T-cell (primary cell): ENCODE measurements at regions of chr7 and their contacts with region 1.

Region 1: DNA sequence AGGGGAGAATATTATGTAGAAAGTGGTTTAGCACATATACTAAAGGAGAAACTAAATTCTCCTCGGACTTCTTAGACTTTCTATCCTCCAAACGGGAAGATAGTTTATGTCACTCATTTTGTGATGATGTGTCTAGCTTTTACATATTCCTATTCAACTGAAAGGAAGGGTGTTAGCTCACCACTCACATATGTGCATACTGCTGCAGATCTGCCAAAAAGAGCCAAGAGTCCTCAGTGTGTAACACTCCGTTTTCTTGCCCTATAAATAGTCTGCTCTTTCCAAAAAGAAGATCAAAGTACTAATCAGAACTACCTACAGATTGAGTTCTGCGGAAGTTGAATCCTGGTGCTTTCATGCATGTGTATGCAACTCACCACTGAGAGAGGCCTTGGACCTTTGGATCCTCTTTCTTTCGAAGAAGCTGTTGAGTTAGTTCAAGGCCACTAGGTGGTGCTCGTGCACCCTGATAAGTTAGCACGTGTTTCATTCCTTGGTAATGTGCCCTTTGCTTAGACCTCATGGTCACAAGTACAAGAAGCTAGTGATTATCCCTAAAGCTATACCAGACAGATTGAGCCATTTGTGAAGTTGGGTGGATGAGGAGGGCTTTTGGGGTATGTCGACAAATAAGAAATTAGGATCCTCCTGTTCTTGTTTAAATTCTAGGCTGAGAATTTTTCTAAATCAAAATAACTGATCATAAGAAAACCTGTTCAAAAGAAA is 14.1 kb downstream of the YAE1 start:
- DNase-seq: peak; percentile 36 to 94 (median 69)
- ATAC-seq: peak; percentile 86 to 91 (median 90)
- H3K4me3 ChIP-seq: no peak overlapping the region
- H3K4me3 Mint-ChIP-seq: no peak overlapping the region
- H3K27ac ChIP-seq: no peak overlapping the region
- H3K27ac Mint-ChIP-seq: peak overlapping the region; percentile 9 to 13
- H3K4me1 ChIP-seq: no peaks in the 10 kb centered on the region
- H3K4me1 Mint-ChIP-seq: peaks cover 9 to 12% (median 10%) of the 10 kb centered on the region in 3 donors
- H3K27me3 ChIP-seq: no peaks in the 10 kb centered on the region
- H3K27me3 Mint-ChIP-seq: no peaks in the 10 kb centered on the region

Region 2: GRCh38 chr7:39566023-39566921 is 14.0 kb before region 1 on chr7 and contains the start of gene YAE1:
- CTCF ChIA-PET with region 1: interaction called, 6 to 14 read pairs
- POLR2A ChIA-PET with region 1: interaction called in 1 of 2 experiments, 4 read pairs
- DNase-seq: peak; percentile 60 to 85 (median 73)
- ATAC-seq: peak; percentile 91 to 96 (median 94)
- H3K4me3 ChIP-seq: peak within 1 kb of the TSS; percentile 82 to 98
- H3K4me3 Mint-ChIP-seq: peak within 1 kb of the TSS; percentile 98 to 99 (median 98)
- H3K27ac ChIP-seq: peak within 1 kb of the TSS; percentile 76
- H3K27ac Mint-ChIP-seq: peak within 1 kb of the TSS; percentile 95 to 99
- H3K4me1 ChIP-seq: peaks cover 5 to 12% of the 10 kb centered on the region in 2 experiments
- H3K4me1 Mint-ChIP-seq: peaks cover 28 to 38% (median 29%) of the 10 kb centered on the region in 3 donors
- H3K27me3 ChIP-seq: no peaks in the 10 kb centered on the region
- H3K27me3 Mint-ChIP-seq: no peaks in the 10 kb centered on the region
- total RNA-seq, gene YAE1: 7.5 to 21.9 (median 15.6) TPM

Region 3: GRCh38 chr7:39623018-39623731 is 42.9 kb after region 1 on chr7 and contains the start of gene RALA:
- CTCF ChIA-PET with region 1: interaction called, 8 to 31 read pairs
- POLR2A ChIA-PET with region 1: interaction called in 1 of 2 experiments, 3 read pairs
- DNase-seq: peak; percentile 77 to 93 (median 88)
- ATAC-seq: peak; percentile 94 to 96 (median 94)
- H3K4me3 ChIP-seq: peak within 1 kb of the TSS; percentile 85 to 92
- H3K4me3 Mint-ChIP-seq: peak within 1 kb of the TSS; percentile 94 to 99 (median 99)
- H3K27ac ChIP-seq: peak within 1 kb of the TSS; percentile 87
- H3K27ac Mint-ChIP-seq: peak within 1 kb of the TSS; percentile 95 to 96
- H3K4me1 ChIP-seq: peaks cover 18 to 33% of the 10 kb centered on the region in 2 experiments
- H3K4me1 Mint-ChIP-seq: peaks cover 52% of the 10 kb centered on the region in 3 donors
- H3K27me3 ChIP-seq: no peaks in the 10 kb centered on the region
- H3K27me3 Mint-ChIP-seq: no peaks in the 10 kb centered on the region
- total RNA-seq, gene RALA: 24.4 to 49.8 (median 36.7) TPM

Region 4: GRCh38 chr7:39732837-39733804 is 152.8 kb after region 1 on chr7:
- CTCF ChIA-PET with region 1: interaction called, 12 to 36 read pairs
- POLR2A ChIA-PET with region 1: interaction called in 1 of 2 experiments, 3 read pairs
- DNase-seq: peak; percentile 77 to 97 (median 93)
- ATAC-seq: peak; percentile 88 to 96 (median 94)
- H3K4me3 ChIP-seq: peak overlapping the region; percentile 71 to 76
- H3K4me3 Mint-ChIP-seq: peak overlapping the region; percentile 91 to 95 (median 93)
- H3K27ac ChIP-seq: peak overlapping the region; percentile 83
- H3K27ac Mint-ChIP-seq: peak overlapping the region; percentile 96 to 98
- H3K4me1 ChIP-seq: peaks cover 7 to 39% of the 10 kb centered on the region in 2 experiments
- H3K4me1 Mint-ChIP-seq: peaks cover 35 to 49% (median 42%) of the 10 kb centered on the region in 3 donors
- H3K27me3 ChIP-seq: no peaks in the 10 kb centered on the region
- H3K27me3 Mint-ChIP-seq: no peaks in the 10 kb centered on the region

Region 5: DNA sequence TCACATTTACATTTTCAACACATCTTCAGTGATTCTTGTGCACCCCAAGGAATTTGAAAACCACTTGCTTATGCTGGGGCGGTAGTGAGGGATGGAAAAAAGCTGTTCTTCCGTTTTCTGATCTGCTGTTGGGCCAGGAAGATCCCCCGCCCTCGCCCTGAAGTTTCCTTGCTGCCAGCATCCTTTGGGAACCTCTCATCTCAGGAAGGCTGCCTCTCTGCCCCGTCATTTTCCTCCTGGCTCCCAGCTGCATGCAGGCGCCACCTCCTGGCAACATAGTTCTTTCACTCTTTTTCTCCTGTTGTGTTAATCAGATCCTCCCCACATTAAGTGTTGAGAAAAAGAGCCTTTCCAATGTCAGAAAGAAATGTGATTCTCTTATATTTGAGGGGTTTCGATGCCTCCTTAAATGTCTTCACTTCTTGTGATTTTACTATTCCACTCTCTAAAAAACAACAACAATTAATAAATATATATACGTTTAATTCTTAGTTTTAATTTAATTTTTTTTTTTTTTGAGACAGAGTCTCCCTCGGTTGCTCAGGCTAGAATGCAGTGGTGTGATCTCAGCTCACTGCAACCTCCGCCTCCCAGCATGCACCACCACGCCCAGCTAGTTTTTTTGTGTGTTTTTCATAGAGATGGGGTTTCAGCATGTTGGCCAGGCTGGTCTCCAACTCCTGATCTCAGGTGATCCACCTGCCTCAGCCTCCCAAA is 165.9 kb after region 1 on chr7:
- CTCF ChIA-PET with region 1: interaction called, 123 to 180 read pairs
- POLR2A ChIA-PET with region 1: no interaction called
- DNase-seq: peak in 34 of 35 experiments; percentile 12 to 76 (median 43)
- ATAC-seq: peak in 3 of 4 experiments; percentile 67 to 70 (median 70)
- H3K4me3 ChIP-seq: no peak overlapping the region
- H3K4me3 Mint-ChIP-seq: no peak overlapping the region
- H3K27ac ChIP-seq: no peak overlapping the region
- H3K27ac Mint-ChIP-seq: peak overlapping the region in 1 of 2 donors; percentile 49
- H3K4me1 ChIP-seq: peaks cover 0 to 3% of the 10 kb centered on the region in 2 experiments
- H3K4me1 Mint-ChIP-seq: peaks cover 6 to 7% (median 6%) of the 10 kb centered on the region in 3 donors
- H3K27me3 ChIP-seq: no peaks in the 10 kb centered on the region
- H3K27me3 Mint-ChIP-seq: no peaks in the 10 kb centered on the region